Mammary epithelial cell (primary cell): ENCODE measurements at regions of chr20 and their contacts with region 1.

Region 1: DNA sequence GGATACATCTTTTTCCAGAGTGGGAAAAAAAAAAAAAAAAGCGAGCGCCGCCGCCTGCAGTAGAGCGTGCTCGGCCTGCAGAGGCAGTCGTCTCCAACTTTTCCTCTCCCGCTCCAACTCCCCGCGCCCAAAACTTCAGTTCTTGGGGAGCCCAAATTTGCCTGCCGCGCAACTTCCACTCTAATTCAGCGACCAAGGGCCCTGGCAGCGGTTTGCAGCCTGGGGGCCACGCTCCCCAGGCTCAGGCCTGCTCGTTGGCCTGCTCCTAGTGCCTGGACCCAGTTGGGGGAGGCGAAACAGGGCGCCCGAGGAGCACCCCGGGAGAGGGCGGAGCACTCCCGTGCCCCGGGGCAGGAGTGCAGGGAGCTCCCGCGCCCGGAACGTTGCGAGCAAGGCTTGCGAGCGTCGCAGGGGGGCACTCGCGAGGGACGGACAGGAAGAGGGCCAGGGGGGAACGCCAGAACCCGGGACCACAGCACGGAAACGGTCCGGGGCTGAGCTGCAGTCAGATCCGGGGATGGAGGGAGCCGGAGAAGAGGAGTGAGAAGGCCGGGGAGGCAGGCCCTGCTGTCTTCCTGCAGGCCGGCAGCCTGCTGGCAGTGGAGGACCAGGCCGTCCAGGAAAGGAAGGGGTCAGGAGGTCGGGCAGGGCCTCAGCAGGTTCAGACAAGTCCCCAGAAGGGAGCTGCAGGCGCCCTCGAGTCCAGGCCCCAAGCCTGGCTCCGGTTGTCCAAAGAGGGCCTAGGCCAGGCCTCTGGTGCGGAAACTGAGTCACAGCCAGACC is at the start of gene STX16:
- DNase-seq: peak; percentile 95
- H3K4me3 ChIP-seq: peak within 1 kb of the TSS; percentile 77 to 93 (median 91)
- H3K27ac ChIP-seq: peak within 1 kb of the TSS; percentile 84
- H3K4me1 ChIP-seq: peaks cover 19% of the 10 kb centered on the region
- H3K27me3 ChIP-seq: no peaks in the 10 kb centered on the region
- CTCF ChIP-seq: peak; percentile 43 to 58
- total RNA-seq, gene STX16: 34.7 to 71.7 TPM

Region 2: DNA sequence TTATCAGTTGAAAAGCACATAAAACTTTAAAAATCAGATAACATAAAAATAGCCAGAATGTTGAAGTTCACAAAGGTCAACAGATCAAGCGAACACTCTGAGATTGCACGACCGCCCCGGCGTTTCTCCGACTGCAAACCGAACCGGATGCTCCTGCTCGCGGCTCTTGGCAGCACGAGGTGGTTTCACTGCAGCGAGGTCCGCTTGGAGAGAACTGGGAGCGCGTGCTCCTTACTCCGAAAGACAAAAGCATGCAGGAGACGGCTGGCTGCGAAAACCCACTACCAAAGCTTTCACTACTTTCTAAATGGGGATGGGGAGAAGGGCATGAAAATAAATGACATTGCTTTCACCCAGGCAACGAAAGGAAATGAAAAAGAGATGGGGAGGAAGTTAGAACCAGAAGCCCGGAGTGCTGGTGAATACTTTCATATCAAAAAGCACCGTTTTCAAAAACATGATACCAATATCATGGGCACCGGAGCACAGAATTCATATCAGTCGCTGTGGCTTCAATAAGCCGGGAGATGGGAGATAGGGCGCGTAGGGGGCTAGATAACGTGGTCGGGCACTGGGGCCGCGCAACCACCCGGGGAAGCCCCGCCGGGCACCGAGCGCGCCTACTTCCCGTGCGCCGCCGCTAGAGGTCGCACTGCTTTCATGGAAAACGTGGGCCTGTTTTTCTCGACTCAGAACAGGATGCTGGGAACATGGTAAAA is 414.2 kb before region 1 on chr20:
- CTCF ChIA-PET with region 1: no interaction called
- dilution Hi-C with region 1: loop called (anchors 5 kb)
- in situ Hi-C with region 1: no loop called
- intact Hi-C with region 1: loop called (anchors 1 kb)
- DNase-seq: peak; percentile 58
- H3K4me3 ChIP-seq: peak overlapping the region; percentile 51 to 74 (median 52)
- H3K27ac ChIP-seq: peak overlapping the region; percentile 48
- H3K4me1 ChIP-seq: peaks cover 8% of the 10 kb centered on the region
- H3K27me3 ChIP-seq: no peaks in the 10 kb centered on the region
- CTCF ChIP-seq: peak; percentile 92 to 98

Region 3: GRCh38 chr20:58481481-58482021 is 169.4 kb before region 1 on chr20:
- CTCF ChIA-PET with region 1: interaction called, 3 read pairs
- dilution Hi-C with region 1: no loop called
- in situ Hi-C with region 1: no loop called
- intact Hi-C with region 1: loop called (anchors 2 kb)
- DNase-seq: peak; percentile 29
- H3K4me3 ChIP-seq: no peak overlapping the region
- H3K27ac ChIP-seq: no peak overlapping the region
- H3K4me1 ChIP-seq: peaks cover 4% of the 10 kb centered on the region
- H3K27me3 ChIP-seq: no peaks in the 10 kb centered on the region
- CTCF ChIP-seq: peak; percentile 29 to 68

Region 4: DNA sequence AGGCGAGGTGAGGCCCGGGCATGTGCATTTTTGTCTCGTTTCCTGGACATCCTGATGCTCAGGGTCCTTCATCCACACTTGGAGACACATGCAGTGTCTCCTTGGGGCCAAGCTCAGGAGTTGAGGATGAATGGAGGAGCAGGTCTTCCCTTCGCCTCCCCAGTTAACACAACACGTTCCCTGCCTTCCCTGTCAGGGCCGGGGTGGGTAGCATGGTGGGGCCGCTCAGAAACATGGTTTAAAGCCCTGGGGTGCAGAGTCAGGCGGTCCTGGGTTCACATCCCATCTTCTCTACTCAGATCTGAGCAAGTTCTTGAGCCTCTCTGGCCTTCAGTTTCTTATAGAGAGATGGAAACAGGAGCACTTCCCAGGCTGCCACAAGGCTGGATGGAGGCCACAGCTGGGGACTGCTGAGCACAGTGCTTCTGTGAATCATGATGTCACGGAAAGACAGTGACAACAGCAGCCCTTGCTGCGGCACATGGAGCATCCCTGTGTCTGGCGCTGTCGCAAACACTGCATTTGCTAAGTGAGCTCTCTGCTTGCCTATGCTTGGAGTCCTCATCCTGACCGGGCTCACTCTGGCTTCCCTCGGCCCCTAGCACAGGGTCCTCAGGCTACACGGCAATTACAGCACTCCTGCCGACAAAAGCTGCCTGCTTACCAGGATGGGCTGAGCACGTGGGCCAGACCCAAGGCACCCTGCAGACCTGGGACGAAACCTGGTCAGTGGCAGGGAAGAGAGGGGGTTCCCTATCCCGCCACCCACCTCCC is 45.5 kb before region 1 on chr20:
- CTCF ChIA-PET with region 1: no interaction called
- dilution Hi-C with region 1: loop called (anchors 5 kb)
- in situ Hi-C with region 1: no loop called
- intact Hi-C with region 1: no loop called
- DNase-seq: no peak
- H3K4me3 ChIP-seq: no peak overlapping the region
- H3K27ac ChIP-seq: no peak overlapping the region
- H3K4me1 ChIP-seq: no peaks in the 10 kb centered on the region
- H3K27me3 ChIP-seq: no peaks in the 10 kb centered on the region
- CTCF ChIP-seq: no peak

Region 5: DNA sequence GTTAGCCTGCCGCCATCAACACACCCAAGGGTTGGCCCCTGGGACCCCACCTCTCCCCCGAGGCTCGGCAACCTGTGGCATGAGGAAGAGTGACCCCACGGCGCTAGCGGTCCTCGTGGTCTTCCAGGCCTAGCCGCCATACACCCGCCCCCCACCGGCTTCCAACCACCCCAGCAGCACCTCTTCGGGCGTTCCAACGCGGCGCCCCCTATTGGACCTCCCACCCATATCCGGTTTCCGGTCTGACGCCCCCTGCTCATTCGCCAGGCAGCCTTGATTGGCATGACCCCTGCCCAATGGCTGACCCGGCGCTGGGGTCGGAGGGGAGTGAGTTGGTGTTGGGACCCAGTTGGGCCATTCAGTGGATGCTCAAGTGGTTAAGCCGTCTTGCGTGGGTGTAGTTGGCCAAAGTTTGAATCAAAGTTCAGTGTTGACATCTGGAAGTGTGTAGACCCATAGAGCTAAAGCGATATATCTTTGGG is 199.8 kb after region 1 on chr20 and contains the start of gene GNAS-AS1:
- CTCF ChIA-PET with region 1: no interaction called
- dilution Hi-C with region 1: no loop called
- in situ Hi-C with region 1: no loop called
- intact Hi-C with region 1: loop called (anchors 5 kb)
- DNase-seq: peak; percentile 63
- H3K4me3 ChIP-seq: peak within 1 kb of the TSS; percentile 39 to 64 (median 62)
- H3K27ac ChIP-seq: no peak within 1 kb of the TSS
- H3K4me1 ChIP-seq: peaks cover 12% of the 10 kb centered on the region
- H3K27me3 ChIP-seq: peaks cover 18% of the 10 kb centered on the region
- CTCF ChIP-seq: peak in 1 of 2 donors; percentile 17
- total RNA-seq, gene GNAS-AS1: 0.33 to 0.73 TPM